Activated CD8-positive, alpha-beta T cell treated with anti-CD3 and anti-CD28 coated beads, Interleukin-2, amount 10 ng/mL, durations not matched to agents 7 days and 5 days (primary cell): ENCODE measurements at regions of chr7 and their contacts with region 1.

Region 1: DNA sequence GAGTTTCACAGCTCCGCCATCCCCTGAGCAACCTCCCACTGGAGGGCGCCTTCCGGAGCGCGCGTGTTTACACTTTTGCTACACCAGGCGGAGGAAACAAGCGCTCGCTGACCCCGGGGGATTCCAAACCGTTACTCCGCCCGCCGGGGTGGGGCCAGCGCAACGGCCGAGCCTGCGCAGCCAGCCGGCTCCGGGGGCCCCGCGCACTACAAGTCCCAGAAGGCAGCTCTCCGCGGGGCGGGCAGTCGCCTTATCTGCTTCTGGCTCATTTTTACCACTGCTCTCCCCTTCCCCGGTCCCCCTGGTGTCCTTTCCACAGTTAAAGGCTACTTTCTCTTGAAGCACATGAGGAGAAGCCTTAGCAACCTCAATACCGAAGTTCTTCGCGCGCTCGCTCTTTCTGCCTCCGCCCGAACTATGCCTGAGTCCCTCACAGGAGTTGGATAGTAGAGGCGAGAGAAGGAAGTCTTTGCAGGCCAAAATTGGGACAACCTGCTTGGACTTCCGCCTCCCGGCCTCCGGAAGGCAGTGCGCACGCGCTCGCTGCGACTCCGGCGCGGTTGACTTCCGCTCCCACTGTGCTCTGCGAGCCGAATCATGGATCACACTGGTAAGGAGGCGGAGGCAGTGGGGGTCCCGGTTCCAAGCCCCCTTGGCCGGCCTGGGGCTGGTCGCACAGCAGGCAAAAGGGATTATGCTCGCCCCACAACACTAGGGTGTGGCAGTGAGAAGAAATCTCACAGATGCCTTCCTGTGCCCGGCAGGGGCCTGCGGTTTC is at the start of gene CBLL1:
- DNase-seq: peak; percentile 98
- ATAC-seq: peak; percentile 94
- H3K4me3 Mint-ChIP-seq: peak within 1 kb of the TSS; percentile 90
- H3K27ac Mint-ChIP-seq: peak within 1 kb of the TSS; percentile 100
- H3K4me1 Mint-ChIP-seq: peaks cover 39% of the 10 kb centered on the region
- H3K27me3 Mint-ChIP-seq: no peaks in the 10 kb centered on the region
- total RNA-seq, gene CBLL1: 36.3 to 42.4 TPM

Region 2: GRCh38 chr7:107168233-107169119 is 575.3 kb before region 1 on chr7 and contains the start of gene HBP1:
- CTCF ChIA-PET with region 1: interaction called, 3 read pairs
- POLR2A ChIA-PET with region 1: interaction called, 26 read pairs
- DNase-seq: peak; percentile 98
- ATAC-seq: peak; percentile 91
- H3K4me3 Mint-ChIP-seq: peak within 1 kb of the TSS; percentile 82
- H3K27ac Mint-ChIP-seq: peak within 1 kb of the TSS; percentile 99
- H3K4me1 Mint-ChIP-seq: peaks cover 28% of the 10 kb centered on the region
- H3K27me3 Mint-ChIP-seq: peaks cover 9% of the 10 kb centered on the region
- total RNA-seq, gene HBP1: 17.2 to 17.3 TPM

Region 3: DNA sequence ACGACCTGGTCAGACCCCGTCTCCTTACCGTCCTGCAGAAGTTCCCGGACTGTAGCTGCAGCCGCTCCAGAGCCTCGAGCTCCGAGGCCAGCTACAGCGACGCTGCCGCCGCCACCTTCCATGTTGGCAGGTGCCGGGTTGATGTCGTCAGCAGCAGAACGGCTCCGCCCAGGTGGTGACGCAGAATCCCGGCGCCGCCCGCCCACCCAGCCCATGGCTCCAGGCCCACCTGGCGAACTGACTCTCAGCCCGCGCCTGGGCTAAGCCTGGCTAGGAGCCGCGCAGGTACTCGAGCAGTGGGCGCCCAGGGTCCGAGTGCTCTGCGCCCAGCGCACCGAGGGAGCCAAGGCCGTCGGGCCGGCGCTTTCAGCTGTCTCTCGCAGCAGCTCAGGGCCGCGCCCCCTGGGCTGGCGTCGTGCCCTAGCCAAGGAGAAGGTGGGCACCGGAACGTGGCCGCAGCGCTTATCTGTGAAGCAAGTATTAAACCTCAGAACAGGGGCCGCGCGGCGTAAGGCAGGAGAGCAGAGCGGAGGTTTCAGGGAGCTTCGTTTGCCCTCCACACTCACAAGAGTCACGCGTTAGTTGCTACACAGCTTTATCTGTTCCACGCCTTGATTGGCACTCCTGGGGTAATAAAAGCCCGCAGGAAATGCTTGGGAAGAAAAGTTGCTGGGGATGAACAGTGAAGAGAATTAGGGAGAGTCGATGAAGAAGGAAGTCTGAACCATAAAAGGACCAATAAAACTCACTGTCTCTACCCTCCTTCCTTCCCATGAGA is 179.8 kb before region 1 on chr7 and contains the starts of genes COG5 and DUS4L:
- CTCF ChIA-PET with region 1: interaction called, 5 read pairs
- POLR2A ChIA-PET with region 1: interaction called, 11 read pairs
- DNase-seq: peak; percentile 88
- ATAC-seq: peak; percentile 93
- H3K4me3 Mint-ChIP-seq: peak within 1 kb of the TSS; percentile 84
- H3K27ac Mint-ChIP-seq: peak within 1 kb of the TSS; percentile 90
- H3K4me1 Mint-ChIP-seq: peaks cover 56% of the 10 kb centered on the region
- H3K27me3 Mint-ChIP-seq: no peaks in the 10 kb centered on the region
- total RNA-seq, gene COG5: 31.3 to 31.8 TPM
- total RNA-seq, gene DUS4L: 10.3 to 11.1 TPM

Region 4: DNA sequence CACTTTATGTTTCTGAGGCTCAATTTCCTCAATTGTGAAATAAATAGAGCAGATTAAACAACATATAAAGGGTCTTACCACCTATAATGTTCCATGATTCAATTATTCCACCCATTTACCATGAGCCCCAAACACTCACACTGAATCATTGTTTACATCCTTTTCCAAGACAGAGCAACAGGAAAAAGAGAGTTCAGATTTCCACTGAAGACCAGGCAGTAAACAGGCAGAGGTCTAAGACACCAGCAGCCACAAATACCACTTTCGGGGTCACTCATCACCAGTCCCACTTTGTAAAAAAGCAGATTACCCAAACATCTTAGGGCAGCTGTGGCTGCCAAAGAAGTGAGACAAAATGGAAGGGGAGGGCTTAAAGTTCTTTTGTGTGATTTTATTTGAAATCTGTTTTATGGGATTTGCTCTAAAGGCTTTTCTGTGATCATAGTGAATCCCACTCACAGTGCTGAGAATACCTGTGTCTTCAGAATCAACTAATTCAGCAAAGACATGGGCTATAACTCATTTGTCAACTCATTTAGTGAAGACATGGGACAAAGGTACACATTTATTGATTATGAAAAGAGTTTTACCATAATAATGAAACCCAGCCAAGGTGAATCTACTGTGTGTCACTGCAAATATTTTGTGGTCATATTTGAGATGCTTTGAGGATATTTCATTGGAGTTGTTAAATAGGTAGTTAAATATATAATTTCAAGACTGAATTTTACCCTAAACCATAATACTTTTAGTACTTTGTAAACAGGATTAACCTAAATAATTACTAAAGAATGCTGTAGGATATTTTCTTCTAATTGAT is 122.4 kb after region 1 on chr7:
- CTCF ChIA-PET with region 1: interaction called, 322 read pairs
- POLR2A ChIA-PET with region 1: interaction called, 6 read pairs
- DNase-seq: peak; percentile 48
- ATAC-seq: peak; percentile 71
- H3K4me3 Mint-ChIP-seq: no peak overlapping the region
- H3K27ac Mint-ChIP-seq: peak overlapping the region; percentile 65
- H3K4me1 Mint-ChIP-seq: peaks cover 27% of the 10 kb centered on the region
- H3K27me3 Mint-ChIP-seq: peaks cover 2% of the 10 kb centered on the region

Region 5: DNA sequence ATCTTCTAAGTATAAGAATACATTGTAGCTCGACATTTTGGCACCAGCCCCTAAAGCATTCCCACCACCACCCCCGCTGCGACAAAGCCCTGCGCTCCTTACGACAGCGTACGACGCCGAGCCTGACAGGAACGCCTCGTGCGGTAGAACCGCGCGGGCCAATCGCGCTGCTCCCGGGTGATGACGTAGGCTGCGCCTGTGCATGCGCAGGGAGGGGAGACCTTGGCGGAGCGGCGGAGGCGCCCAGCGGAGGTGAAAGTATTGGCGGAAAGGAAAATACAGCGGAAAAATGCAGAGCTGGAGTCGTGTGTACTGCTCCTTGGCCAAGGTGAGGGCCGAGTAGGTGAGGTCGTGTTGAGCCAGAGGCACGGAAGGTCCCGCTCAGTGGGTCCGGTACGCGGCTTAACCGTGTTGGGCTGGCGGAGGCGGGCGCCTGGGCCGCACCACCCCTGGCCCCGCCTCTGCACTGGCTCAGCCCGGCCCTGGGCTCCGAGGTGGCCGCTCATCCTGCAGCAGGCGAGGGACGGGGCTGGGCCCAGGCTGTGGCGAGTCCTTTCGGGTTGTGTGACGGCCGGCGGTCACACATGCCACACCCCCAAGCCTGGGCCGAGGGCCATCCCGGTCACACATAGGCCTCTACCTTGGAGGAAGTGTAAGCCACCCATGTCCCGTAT is 147.3 kb after region 1 on chr7 and contains the start of gene DLD:
- CTCF ChIA-PET with region 1: interaction called, 9 read pairs
- POLR2A ChIA-PET with region 1: interaction called, 22 read pairs
- DNase-seq: peak; percentile 96
- ATAC-seq: peak; percentile 99
- H3K4me3 Mint-ChIP-seq: peak within 1 kb of the TSS; percentile 88
- H3K27ac Mint-ChIP-seq: peak within 1 kb of the TSS; percentile 95
- H3K4me1 Mint-ChIP-seq: peaks cover 34% of the 10 kb centered on the region
- H3K27me3 Mint-ChIP-seq: peaks cover 4% of the 10 kb centered on the region
- total RNA-seq, gene DLD: 61.2 to 65.0 TPM